CD4-positive, alpha-beta T cell (primary cell): ENCODE measurements at regions of chr2 and their contacts with region 1.

Region 1: GRCh38 chr2:28958689-28959088 is 22.4 kb upstream of the TOGARAM2 start:
- DNase-seq: peak in 11 of 14 experiments; percentile 4 to 76 (median 15)
- ATAC-seq: peak; percentile 82
- H3K4me3 ChIP-seq: no peak overlapping the region
- H3K4me3 Mint-ChIP-seq: no peak overlapping the region
- H3K27ac ChIP-seq: no peak overlapping the region
- H3K27ac Mint-ChIP-seq: no peak overlapping the region
- H3K4me1 ChIP-seq: peaks cover 9% of the 10 kb centered on the region
- H3K4me1 Mint-ChIP-seq: peaks cover 4% of the 10 kb centered on the region
- H3K27me3 ChIP-seq: no peaks in the 10 kb centered on the region
- H3K27me3 Mint-ChIP-seq: no peaks in the 10 kb centered on the region
- CTCF ChIP-seq: peak; percentile 82

Region 2: GRCh38 chr2:27823135-27823534 is 1135.6 kb before region 1 on chr2:
- CTCF ChIA-PET with region 1: no interaction called
- POLR2A ChIA-PET with region 1: no interaction called
- intact Hi-C with region 1: no loop called
- DNase-seq: no peak
- ATAC-seq: no peak
- H3K4me3 ChIP-seq: no peak overlapping the region
- H3K4me3 Mint-ChIP-seq: no peak overlapping the region
- H3K27ac ChIP-seq: no peak overlapping the region
- H3K27ac Mint-ChIP-seq: no peak overlapping the region
- H3K4me1 ChIP-seq: no peaks in the 10 kb centered on the region
- H3K4me1 Mint-ChIP-seq: no peaks in the 10 kb centered on the region
- H3K27me3 ChIP-seq: no peaks in the 10 kb centered on the region
- H3K27me3 Mint-ChIP-seq: no peaks in the 10 kb centered on the region
- CTCF ChIP-seq: no peak

Region 3: DNA sequence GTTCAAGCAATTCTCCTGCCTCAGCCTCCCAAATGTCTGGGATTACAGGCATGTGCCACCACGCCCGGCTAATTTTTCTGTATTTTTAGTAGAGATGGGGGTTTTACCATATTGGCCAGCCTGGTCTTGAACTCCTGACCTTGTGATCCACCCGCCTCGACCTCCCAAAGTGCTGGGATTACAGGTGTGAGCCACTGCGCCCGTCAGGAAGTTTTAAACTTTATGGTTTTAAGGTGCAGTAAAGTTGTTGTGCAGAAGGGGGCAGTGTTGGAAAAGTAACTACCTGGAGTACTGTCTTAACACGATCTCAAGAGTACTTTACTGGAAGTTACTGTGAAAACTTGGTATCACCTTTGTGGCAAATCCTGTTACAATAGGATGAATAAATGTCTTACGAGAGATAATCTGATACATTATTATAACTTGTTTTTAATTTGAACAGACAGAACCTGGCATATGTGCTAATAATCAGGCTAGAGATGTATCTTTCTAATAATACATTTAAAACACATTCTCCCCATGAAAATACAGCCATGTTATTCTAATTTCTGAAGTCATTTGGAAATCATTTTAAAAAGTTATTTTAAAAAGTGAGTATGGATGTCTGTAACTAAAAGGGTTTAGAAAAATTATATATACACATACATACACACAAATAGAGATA is 137.3 kb before region 1 on chr2:
- CTCF ChIA-PET with region 1: no interaction called
- POLR2A ChIA-PET with region 1: no interaction called
- intact Hi-C with region 1: loop called (anchors 2 to 5 kb)
- DNase-seq: peak in 13 of 14 experiments; percentile 18 to 84 (median 44)
- ATAC-seq: peak; percentile 94
- H3K4me3 ChIP-seq: no peak overlapping the region
- H3K4me3 Mint-ChIP-seq: no peak overlapping the region
- H3K27ac ChIP-seq: no peak overlapping the region
- H3K27ac Mint-ChIP-seq: no peak overlapping the region
- H3K4me1 ChIP-seq: no peaks in the 10 kb centered on the region
- H3K4me1 Mint-ChIP-seq: no peaks in the 10 kb centered on the region
- H3K27me3 ChIP-seq: no peaks in the 10 kb centered on the region
- H3K27me3 Mint-ChIP-seq: no peaks in the 10 kb centered on the region
- CTCF ChIP-seq: peak; percentile 75

Region 4: DNA sequence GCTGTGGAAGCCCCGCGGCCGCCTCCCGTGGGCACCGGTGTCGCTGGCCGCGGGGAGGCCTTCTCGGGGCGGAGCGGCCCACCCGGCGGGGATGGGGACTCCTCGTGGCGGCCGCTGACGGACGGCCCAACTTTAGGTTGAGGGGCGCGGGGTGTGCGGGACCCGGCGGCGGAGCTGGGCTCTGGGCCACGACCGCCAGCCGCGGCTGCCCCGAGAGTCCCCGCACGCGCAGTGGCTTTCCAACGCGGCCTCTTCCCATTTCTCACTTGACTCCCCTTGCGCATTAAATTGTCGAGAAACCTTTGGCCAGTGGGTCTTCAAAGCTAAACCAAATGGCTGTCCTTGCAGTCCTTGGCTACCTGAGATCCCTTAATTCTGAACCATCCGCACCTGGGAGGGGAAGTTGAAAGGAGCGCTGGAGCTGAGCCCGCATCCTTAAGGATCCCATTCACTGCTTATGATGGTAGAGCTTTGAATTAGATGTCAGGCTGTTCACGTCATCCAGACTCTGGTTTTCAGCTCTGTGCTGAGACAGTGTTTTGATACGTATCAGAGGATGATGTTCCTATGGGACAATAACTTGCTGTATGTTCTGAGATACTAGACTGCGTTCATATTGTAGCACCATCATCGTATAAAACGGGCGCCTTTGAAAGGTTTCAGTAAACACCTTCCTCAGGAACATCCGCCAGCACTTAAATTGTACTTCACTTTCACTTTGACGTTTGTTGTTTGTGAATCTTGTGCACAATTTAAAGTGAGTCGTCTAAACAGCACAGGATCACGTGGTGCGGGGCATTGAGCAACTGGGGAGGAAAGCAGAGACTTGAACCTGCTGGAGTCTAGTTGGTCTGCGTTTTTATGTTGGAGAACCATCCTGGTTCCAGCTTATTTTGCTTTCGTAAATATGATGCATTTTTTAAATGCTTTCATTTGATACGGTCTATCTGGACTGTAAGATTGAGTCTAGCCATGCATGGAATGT is 157.4 kb after region 1 on chr2:
- CTCF ChIA-PET with region 1: no interaction called
- POLR2A ChIA-PET with region 1: interaction called, 3 read pairs
- intact Hi-C with region 1: loop called in 1 of 2 experiments (anchors 2 kb)
- DNase-seq: peak; percentile 46 to 88 (median 61)
- ATAC-seq: peak; percentile 72
- H3K4me3 ChIP-seq: peak overlapping the region; percentile 85
- H3K4me3 Mint-ChIP-seq: peak overlapping the region; percentile 97
- H3K27ac ChIP-seq: peak overlapping the region; percentile 75 to 88
- H3K27ac Mint-ChIP-seq: peak overlapping the region; percentile 100
- H3K4me1 ChIP-seq: peaks cover 23% of the 10 kb centered on the region
- H3K4me1 Mint-ChIP-seq: peaks cover 51% of the 10 kb centered on the region
- H3K27me3 ChIP-seq: no peaks in the 10 kb centered on the region
- H3K27me3 Mint-ChIP-seq: no peaks in the 10 kb centered on the region
- CTCF ChIP-seq: no peak

Region 5: GRCh38 chr2:29196792-29197788 is 238.4 kb after region 1 on chr2:
- CTCF ChIA-PET with region 1: no interaction called
- POLR2A ChIA-PET with region 1: no interaction called
- intact Hi-C with region 1: loop called (anchors 1 kb)
- DNase-seq: peak; percentile 64 to 85 (median 73)
- ATAC-seq: peak; percentile 97
- H3K4me3 ChIP-seq: no peak overlapping the region
- H3K4me3 Mint-ChIP-seq: no peak overlapping the region
- H3K27ac ChIP-seq: no peak overlapping the region
- H3K27ac Mint-ChIP-seq: no peak overlapping the region
- H3K4me1 ChIP-seq: peaks cover 3% of the 10 kb centered on the region
- H3K4me1 Mint-ChIP-seq: peaks cover 5% of the 10 kb centered on the region
- H3K27me3 ChIP-seq: no peaks in the 10 kb centered on the region
- H3K27me3 Mint-ChIP-seq: no peaks in the 10 kb centered on the region
- CTCF ChIP-seq: peak; percentile 95

Region 6: GRCh38 chr2:29309090-29310029 is 350.7 kb after region 1 on chr2:
- CTCF ChIA-PET with region 1: no interaction called
- POLR2A ChIA-PET with region 1: no interaction called
- intact Hi-C with region 1: loop called in 1 of 2 experiments (anchors 10 kb)
- DNase-seq: peak in 10 of 14 experiments; percentile 6 to 71 (median 19)
- ATAC-seq: peak; percentile 70
- H3K4me3 ChIP-seq: no peak overlapping the region
- H3K4me3 Mint-ChIP-seq: no peak overlapping the region
- H3K27ac ChIP-seq: no peak overlapping the region
- H3K27ac Mint-ChIP-seq: no peak overlapping the region
- H3K4me1 ChIP-seq: peaks cover 6% of the 10 kb centered on the region
- H3K4me1 Mint-ChIP-seq: peaks cover 3% of the 10 kb centered on the region
- H3K27me3 ChIP-seq: peaks cover 0 to 3% of the 10 kb centered on the region in 2 experiments
- H3K27me3 Mint-ChIP-seq: peaks cover 33% of the 10 kb centered on the region
- CTCF ChIP-seq: peak; percentile 74

Region 7: DNA sequence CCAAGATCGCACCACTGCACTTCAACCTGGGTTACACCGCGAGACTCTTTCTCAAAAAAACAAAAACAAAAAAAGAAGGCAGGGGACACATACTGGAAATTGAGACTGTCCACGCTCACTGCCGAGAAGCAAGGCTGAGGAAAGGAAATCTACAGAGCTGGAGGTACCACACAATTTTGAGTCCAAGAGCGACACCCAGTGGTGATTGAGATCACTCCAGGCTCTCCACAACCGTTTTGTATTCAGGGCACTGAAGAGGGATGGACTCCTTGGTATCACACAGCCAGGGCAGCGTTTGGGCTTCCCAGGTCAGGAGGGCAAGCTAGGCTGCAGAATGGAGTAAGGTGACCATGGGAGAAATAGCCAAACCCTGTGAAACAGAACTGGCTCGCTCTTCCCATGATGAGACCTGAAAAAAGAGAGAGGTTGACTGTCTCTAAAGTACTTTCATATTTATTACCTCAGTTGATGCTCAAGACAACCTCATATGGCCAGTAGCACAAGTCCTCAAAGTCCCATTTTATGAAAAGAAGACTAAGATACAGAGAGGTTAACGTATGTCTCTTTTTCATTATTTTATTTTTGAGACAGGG is 1113.7 kb after region 1 on chr2:
- CTCF ChIA-PET with region 1: no interaction called
- POLR2A ChIA-PET with region 1: no interaction called
- intact Hi-C with region 1: loop called in 1 of 2 experiments (anchors 5 kb)
- DNase-seq: peak; percentile 17 to 75 (median 46)
- ATAC-seq: peak; percentile 71
- H3K4me3 ChIP-seq: no peak overlapping the region
- H3K4me3 Mint-ChIP-seq: no peak overlapping the region
- H3K27ac ChIP-seq: no peak overlapping the region
- H3K27ac Mint-ChIP-seq: no peak overlapping the region
- H3K4me1 ChIP-seq: peaks cover 3% of the 10 kb centered on the region
- H3K4me1 Mint-ChIP-seq: no peaks in the 10 kb centered on the region
- H3K27me3 ChIP-seq: peaks cover 17 to 21% of the 10 kb centered on the region in 2 experiments
- H3K27me3 Mint-ChIP-seq: peaks cover 45% of the 10 kb centered on the region
- CTCF ChIP-seq: peak; percentile 58